Activated T-helper 1 cell treated with anti-CD3 and anti-CD28 coated beads, Interleukin-12 subunit alpha, Interleukin-12 subunit beta, Interleukin-2, Interleukin-4 antibody, amounts not matched to agents 30 ng/mL and 10 ng/mL and 1 ng/mL, durations not matched to agents 14 hours and 24 hours and 36 hours (primary cell): ENCODE measurements at regions of chr11 and their contacts with region 1.

Region 1: DNA sequence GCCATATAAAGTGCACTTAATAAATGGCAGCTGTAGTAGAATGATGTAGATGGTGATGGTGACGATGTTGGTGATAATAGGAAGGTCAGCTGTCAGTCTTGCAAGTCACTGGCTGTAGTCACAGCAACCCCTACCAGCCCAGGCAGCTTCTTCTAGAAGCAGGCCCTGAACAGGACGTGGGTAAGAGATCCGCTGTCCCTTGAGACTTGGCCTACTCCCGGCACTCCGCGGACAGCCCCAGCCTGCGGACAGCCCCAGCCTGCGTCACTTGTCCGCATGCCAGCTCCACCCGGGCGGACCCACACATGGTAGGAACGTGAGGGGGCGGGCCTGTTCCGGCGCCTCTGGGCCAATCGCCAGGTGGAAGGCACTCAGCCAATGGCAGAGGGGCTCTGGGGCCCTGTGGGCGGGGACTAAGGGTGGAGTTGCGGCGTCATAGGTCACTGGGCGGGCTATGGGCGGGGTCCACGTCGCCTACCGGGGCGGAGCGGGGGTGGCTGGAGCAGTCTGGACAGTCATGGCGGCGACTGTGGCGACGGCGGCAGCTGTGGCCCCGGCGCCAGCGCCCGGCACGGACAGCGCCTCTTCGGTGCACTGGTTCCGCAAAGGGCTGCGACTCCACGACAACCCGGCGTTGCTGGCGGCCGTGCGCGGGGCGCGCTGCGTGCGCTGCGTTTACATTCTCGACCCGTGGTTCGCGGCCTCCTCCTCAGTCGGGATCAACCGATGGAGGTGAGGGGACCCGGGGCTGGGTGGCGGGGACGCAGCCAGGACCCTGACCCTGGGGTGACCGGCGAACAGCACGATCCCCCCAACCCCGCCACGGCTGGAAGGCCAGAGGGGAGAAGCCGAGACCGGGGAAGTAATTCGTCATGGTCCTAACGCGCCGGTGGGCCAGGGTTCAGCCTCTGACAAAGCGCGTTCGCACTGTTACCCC is at the start of gene CRY2:
- DNase-seq: peak; percentile 97
- H3K4me3 Mint-ChIP-seq: peak within 1 kb of the TSS; percentile 86
- H3K27ac Mint-ChIP-seq: peak within 1 kb of the TSS; percentile 94
- H3K4me1 Mint-ChIP-seq: peaks cover 44% of the 10 kb centered on the region
- H3K27me3 Mint-ChIP-seq: peaks cover 9% of the 10 kb centered on the region
- total RNA-seq, gene CRY2: 19.4 and 23.7 TPM in 2 replicates

Region 2: DNA sequence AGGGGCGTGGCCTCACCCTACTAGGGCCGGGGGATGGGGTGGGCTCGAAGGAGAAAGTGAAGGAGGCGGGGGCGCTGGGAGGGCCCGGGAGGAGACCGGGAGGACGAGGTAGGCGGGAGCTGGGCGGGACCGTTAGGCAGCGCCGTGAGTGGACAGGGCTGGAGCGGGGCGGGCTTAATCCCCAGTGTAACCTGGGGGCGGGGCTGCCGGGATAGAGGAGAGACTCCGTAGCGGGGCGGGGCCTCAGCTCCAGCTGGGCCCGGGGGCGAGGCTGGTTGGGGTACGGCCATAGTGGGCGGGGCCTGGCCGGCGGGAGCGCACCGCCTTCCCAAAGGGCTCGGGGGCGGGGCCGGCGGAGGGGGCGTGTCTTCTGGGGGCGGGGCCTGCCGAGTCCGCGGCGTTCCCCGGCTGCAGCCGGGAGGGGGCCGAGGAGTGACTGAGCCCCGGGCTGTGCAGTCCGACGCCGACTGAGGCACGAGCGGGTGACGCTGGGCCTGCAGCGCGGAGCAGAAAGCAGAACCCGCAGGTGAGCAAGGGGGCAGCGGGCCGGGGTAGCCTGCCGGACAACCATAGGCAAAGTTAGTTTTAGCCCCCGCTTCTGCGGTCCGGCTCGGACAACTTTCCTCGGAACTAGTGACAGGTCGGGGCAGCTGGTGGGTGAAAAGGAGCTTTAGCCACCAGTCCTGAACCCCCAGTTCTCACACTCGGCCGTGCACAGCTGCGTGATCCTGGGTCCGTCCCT is 1281.9 kb before region 1 on chr11 and contains the start of gene CD82:
- intact Hi-C with region 1: loop called (anchors 1 kb)
- DNase-seq: peak; percentile 98
- H3K4me3 Mint-ChIP-seq: peak within 1 kb of the TSS; percentile 92
- H3K27ac Mint-ChIP-seq: peak within 1 kb of the TSS; percentile 92
- H3K4me1 Mint-ChIP-seq: peaks cover 66% of the 10 kb centered on the region
- H3K27me3 Mint-ChIP-seq: no peaks in the 10 kb centered on the region
- total RNA-seq, gene CD82: 499 and 500 TPM in 2 replicates

Region 3: DNA sequence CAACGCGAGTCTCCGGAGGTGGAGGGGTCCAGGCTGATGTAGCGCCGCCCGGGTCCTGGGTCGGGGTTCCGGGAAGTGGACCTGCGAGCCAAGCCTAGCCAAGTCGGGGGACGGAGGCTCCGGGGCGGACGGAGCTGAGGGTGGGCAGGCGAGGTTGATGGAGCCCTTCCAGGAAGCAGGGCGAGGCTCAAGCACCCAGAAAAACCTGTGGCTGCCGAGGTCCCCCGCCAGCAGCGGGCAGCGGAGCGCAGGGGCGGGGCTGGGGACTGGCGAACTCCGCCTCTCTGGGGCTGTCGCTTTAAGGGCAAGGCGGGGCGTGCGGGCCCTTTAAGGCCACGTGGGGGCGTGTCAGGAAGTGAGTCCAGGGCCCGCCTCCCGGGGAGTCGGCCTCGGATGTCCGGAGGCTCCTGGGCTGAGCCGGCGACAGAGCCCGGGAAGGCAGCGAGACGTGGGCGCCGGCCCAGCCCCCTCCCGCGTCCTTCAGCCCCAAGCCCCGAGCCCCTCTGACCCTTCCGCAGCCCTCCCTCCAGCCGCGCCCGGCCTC is 42.4 kb before region 1 on chr11 and contains the start of gene SLC35C1:
- intact Hi-C with region 1: loop called (anchors 1 kb)
- DNase-seq: peak; percentile 96
- H3K4me3 Mint-ChIP-seq: peak within 1 kb of the TSS; percentile 97
- H3K27ac Mint-ChIP-seq: peak within 1 kb of the TSS; percentile 92
- H3K4me1 Mint-ChIP-seq: peaks cover 38% of the 10 kb centered on the region
- H3K27me3 Mint-ChIP-seq: no peaks in the 10 kb centered on the region
- total RNA-seq, gene SLC35C1: 16.3 and 18.2 TPM in 2 replicates

Region 4: DNA sequence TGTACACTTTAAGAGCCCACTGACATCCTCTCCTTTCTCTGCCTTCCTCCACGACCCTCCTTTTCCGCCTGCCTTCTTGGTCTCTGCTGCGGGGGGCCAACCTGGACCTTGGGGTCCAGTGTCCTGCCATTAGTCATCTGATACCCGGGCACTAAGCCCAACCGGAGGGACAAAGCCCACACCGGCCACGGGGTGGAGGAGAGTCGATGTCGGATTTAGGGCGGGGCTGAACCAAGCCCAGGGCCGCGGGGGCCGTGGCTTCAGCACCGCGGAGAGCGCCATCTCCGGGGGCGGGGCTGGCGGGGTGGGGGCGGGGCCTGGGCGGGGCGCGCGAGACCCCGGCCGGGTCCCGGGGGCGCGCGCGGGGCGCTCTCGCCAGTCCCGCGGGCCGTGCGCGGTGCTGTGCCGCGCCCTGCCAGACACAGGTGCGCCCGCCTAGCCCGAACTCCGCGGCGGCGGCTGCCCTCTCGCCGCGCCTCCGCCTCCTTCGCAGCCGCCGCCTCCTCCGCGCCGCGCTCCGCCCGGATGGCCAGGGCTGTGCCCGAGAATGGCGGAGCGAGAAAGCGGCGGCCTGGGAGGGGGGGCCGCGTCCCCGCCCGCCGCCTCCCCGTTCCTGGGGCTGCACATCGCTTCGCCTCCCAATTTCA is 38.2 kb after region 1 on chr11 and contains the start of gene MAPK8IP1:
- intact Hi-C with region 1: loop called (anchors 1 kb)
- DNase-seq: peak; percentile 34
- H3K4me3 Mint-ChIP-seq: peak within 1 kb of the TSS; percentile 71
- H3K27ac Mint-ChIP-seq: no peak within 1 kb of the TSS
- H3K4me1 Mint-ChIP-seq: peaks cover 6% of the 10 kb centered on the region
- H3K27me3 Mint-ChIP-seq: peaks cover 5% of the 10 kb centered on the region
- total RNA-seq, gene MAPK8IP1: 0.51 and 0.91 TPM in 2 replicates

Region 5: GRCh38 chr11:45917623-45918330 is 70.5 kb after region 1 on chr11 and contains the start of gene PEX16:
- intact Hi-C with region 1: loop called (anchors 1 kb)
- DNase-seq: peak; percentile 97
- H3K4me3 Mint-ChIP-seq: peak within 1 kb of the TSS; percentile 98
- H3K27ac Mint-ChIP-seq: peak within 1 kb of the TSS; percentile 92
- H3K4me1 Mint-ChIP-seq: peaks cover 22% of the 10 kb centered on the region
- H3K27me3 Mint-ChIP-seq: peaks cover 10% of the 10 kb centered on the region
- total RNA-seq, gene PEX16: 37.4 and 44.6 TPM in 2 replicates

Region 6: GRCh38 chr11:46121724-46122477 is 274.7 kb after region 1 on chr11:
- intact Hi-C with region 1: loop called (anchors 2 kb)
- DNase-seq: peak; percentile 76
- H3K4me3 Mint-ChIP-seq: peak overlapping the region; percentile 86
- H3K27ac Mint-ChIP-seq: peak overlapping the region; percentile 91
- H3K4me1 Mint-ChIP-seq: peaks cover 40% of the 10 kb centered on the region
- H3K27me3 Mint-ChIP-seq: no peaks in the 10 kb centered on the region